ENCODE measurements at regions of chr1 and their contacts with region 1.

Region 1: GRCh38 chr1:99180343-99180808 is 83.9 kb upstream of the PLPPR4 start:
- DNase-seq: peak; percentile 39
- CTCF ChIP-seq: peak; percentile 61

Region 2: DNA sequence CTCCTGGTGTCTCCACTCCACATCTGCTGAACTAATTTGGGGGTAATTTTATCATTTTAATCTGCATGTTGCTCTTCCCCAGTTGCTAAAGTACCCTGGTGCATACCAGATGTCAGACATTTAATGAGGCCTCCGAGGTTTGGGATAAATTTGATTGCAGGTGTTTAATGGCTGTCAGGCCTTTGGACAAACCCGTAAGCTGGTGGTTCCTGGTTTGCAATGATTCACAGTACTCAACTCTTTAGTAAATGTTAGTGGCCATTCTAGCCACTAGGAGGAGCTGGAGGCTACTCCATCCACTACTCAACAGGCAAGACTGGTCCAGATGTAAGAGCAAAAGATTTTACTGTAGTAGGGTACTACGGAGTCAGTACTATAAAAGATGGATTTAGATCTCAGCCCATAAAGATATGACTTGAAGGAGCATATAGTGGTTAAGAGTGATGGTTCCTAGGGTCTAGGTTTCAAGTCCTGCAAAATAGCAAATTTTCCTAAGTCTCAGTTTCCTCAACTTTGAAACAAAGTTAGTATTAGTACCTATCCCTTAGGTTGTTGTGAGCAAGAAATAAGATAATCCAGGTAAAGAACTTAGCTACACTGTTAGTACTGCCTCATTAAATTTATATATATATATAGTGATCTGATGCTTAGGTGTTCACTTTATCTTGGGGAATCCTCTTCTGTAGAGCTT is 386.0 kb before region 1 on chr1:
- in situ Hi-C with region 1: no loop called
- DNase-seq: peak; percentile 43
- CTCF ChIP-seq: peak; percentile 58

Region 3: DNA sequence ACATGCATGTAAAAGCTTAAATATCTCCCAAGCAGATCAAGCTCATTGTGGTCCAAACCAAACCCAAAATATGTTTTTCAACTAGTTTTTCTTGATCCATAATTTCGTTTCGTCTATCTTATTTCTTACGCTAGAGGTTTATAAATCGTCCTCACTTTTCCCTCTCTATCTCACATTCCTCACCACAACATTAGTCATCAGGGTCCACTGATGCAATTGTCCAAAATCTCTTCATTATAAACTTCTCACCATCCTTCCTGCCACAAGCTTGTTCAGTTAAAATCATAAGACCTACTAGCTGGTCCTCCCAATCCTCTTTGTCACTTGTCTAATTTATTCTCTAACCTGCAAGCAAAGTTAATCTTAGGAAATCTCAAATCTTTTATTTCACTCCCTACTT is 292.5 kb after region 1 on chr1:
- in situ Hi-C with region 1: loop called (anchors 10 kb)
- DNase-seq: no peak
- CTCF ChIP-seq: no peak

Region 4: DNA sequence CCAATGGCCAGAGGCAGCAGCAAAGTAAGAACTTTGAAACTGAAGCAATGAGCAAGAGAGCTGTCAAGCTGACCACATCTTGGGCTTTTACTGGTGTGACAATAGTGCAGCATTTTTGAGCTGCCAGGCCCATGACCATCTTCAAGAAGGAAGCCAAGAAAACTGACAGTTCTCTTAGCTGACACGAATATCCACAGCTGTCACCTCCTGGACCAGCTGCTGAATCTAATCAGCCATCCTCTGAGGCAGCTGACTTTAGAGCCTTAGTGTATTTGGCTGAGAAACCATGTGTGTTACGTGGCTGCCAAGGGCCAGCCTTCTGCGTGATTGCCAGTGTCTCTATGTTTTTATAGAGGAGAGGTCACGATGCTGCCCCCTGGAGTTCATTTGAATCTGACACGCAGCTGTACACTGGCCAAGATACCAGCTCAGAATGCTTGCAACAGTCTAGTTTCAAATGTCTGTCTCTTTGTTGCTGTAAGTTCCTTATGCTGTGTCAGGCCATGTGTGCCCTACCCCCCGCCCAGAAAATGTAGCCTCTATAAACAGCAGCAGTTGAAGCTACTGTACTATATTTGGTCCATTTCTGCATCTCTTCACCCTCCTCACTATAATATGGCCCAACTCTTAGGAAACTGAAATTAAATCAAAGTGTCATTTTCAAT is 505.3 kb after region 1 on chr1:
- in situ Hi-C with region 1: loop called (anchors 25 kb)
- DNase-seq: peak; percentile 21
- CTCF ChIP-seq: peak; percentile 35

Measured in GM13976 (cell line).